ENCODE measurements at regions of chr22 and their contacts with region 1.

Region 1: DNA sequence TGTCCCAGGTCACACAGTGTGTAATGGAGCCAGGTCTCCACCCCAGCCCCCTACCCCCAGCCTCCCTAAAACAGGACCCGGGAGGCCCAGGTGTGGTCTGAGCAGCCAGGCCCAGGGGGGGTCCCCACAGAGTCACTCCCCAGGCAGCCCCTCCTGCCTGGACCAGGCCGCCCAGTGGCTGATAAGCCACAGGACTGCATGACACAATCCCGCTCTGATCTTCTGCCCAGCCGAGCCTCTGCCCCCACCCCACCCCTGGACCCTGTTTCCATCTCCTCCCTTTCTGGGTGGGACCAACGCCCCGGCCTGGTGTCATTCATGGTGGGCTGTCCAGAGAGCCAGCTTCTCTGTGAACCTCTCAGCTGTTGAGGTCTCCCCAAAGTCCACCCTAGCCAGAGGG is 7.8 kb upstream of the LIF start:
- DNase-seq: no peak
- H3K4me3 ChIP-seq: no peak overlapping the region
- H3K27ac ChIP-seq: no peak overlapping the region
- H3K4me1 ChIP-seq: peaks cover 7 to 20% (median 13%) of the 10 kb centered on the region in 4 experiments
- H3K27me3 ChIP-seq: peaks cover 0 to 2% (median 0%) of the 10 kb centered on the region in 4 experiments; a peak in 1 of 7 replicates
- CTCF ChIP-seq: no peak
- EP300 ChIP-seq: no peak
- POLR2A ChIP-seq: no peak
- RAD21 ChIP-seq: no peak

Region 2: DNA sequence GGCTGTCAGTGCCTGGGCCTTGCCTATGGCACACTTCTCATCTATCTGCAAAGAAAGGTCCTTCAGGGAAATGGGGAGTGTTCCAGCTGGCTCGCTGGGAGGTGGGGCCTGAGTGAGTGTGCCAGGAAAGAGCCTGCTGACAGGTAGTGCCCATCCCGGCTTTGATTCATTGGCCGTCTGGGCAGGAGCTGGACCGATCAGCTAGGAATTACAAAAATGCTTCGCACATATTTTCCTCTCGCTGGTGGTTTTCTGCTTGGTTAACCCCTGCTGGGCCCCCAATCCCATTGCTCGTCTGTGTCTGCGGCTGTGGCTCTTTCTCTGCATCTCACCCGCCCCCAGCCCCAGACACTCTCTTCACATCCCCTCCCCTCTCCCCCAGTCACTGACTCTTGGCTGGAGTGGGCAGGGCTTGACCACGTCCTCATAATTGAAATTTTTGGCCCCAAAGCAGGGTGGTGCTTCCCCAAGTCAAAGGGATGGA is 18.6 kb before region 1 on chr22:
- CTCF ChIA-PET with region 1: interaction called, 15 read pairs
- POLR2A ChIA-PET with region 1: interaction called, 7 read pairs
- DNase-seq: no peak
- H3K4me3 ChIP-seq: no peak overlapping the region
- H3K27ac ChIP-seq: no peak overlapping the region
- H3K4me1 ChIP-seq: peaks cover 8 to 29% (median 18%) of the 10 kb centered on the region in 4 experiments
- H3K27me3 ChIP-seq: no peaks in the 10 kb centered on the region
- CTCF ChIP-seq: no peak
- EP300 ChIP-seq: no peak
- POLR2A ChIP-seq: no peak
- RAD21 ChIP-seq: no peak

Region 3: DNA sequence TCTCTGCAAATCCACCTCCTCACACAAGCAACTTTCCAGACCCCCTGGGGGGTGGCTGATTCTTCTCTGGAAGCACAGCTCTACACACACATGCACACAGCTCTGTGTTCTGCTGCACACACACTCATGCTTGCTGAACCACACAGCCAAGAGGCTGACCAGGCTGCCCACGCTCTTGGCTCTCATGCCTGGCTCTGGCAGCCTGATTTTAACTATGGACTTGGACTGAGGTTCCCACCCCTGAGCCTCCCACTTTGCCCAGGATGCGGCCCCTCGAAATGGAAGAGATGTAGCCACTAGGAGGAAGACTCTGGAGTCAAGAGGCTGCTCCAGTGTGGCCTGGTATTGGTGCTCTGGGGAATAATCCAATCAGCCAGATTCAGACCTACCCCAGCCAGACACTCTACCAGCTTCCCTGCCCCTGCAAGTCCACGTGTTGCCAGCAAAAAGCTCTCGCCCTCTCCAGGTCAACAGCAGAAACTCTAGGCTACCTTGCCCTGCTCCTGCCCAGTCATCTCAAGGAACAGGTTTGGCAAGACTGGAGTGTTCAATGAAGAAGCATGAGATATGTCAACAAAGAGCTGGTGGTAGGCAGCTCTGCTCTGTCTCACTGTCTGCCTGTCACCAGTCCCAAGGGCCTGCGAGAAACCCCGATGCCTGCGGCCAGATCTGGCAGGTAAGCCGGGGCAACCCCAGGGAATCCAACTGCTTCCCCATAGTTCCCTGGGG is 43.8 kb after region 1 on chr22:
- CTCF ChIA-PET with region 1: no interaction called
- POLR2A ChIA-PET with region 1: no interaction called
- DNase-seq: no peak
- H3K4me3 ChIP-seq: no peak overlapping the region
- H3K27ac ChIP-seq: no peak overlapping the region
- H3K4me1 ChIP-seq: no peaks in the 10 kb centered on the region; a peak in 1 of 7 replicates
- H3K27me3 ChIP-seq: no peaks in the 10 kb centered on the region
- CTCF ChIP-seq: no peak
- EP300 ChIP-seq: no peak
- POLR2A ChIP-seq: no peak
- RAD21 ChIP-seq: no peak